Heart right ventricle (tissue), 16 donors: ENCODE measurements at regions of chr6 and their contacts with region 1.

Region 1: GRCh38 chr6:118551063-118552053 is 3.3 kb downstream of the PLN start:
- DNase-seq: no peak
- ATAC-seq: peak in 7 of 8 donors; percentile 43 to 69 (median 67)
- H3K4me3 ChIP-seq: peak overlapping the region; percentile 29 to 60 (median 50)
- H3K27ac ChIP-seq: peak overlapping the region in 9 of 10 donors; percentile 37 to 89 (median 81)
- H3K4me1 ChIP-seq: peaks cover 0 to 12% (median 0%) of the 10 kb centered on the region in 9 donors
- H3K27me3 ChIP-seq: no peaks in the 10 kb centered on the region
- CTCF ChIP-seq: peak; percentile 30 to 74 (median 55)

Region 2: GRCh38 chr6:118292558-118292957 is 258.8 kb before region 1 on chr6:
- intact Hi-C with region 1: loop called in 5 of 10 experiments (anchors 5 to 10 kb)
- DNase-seq: no peak
- ATAC-seq: no peak
- H3K4me3 ChIP-seq: no peak overlapping the region
- H3K27ac ChIP-seq: peak overlapping the region in 8 of 10 donors; percentile 57 to 91 (median 84)
- H3K4me1 ChIP-seq: peaks cover 0 to 54% (median 17%) of the 10 kb centered on the region in 9 donors
- H3K27me3 ChIP-seq: no peaks in the 10 kb centered on the region
- CTCF ChIP-seq: no peak

Region 3: DNA sequence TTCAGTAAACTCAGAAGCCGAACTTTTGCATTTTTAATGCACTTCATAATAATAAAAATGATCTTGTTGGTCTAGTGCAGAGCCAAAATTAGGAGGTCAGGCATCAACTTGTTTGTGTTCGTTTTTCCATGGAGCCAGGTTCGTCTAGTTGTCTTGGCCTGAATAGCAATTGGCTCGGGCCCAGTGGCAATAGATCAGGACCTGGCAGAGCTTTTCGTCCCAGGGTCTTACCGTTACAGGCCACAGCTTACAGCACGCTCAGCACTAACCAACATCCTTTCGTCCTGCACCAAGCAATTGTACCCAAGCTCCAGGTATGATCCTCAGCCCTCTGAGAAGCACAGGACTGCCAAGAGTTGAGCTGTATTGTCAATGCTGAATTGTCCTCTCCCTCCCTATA is 243.8 kb before region 1 on chr6:
- intact Hi-C with region 1: loop called in 1 of 10 experiments (anchors 5 kb)
- DNase-seq: peak; percentile 33 to 60
- ATAC-seq: peak; percentile 24 to 90 (median 67)
- H3K4me3 ChIP-seq: no peak overlapping the region
- H3K27ac ChIP-seq: peak overlapping the region; percentile 34 to 83 (median 74)
- H3K4me1 ChIP-seq: peaks cover 0 to 54% (median 28%) of the 10 kb centered on the region in 9 donors
- H3K27me3 ChIP-seq: no peaks in the 10 kb centered on the region
- CTCF ChIP-seq: no peak

Region 4: DNA sequence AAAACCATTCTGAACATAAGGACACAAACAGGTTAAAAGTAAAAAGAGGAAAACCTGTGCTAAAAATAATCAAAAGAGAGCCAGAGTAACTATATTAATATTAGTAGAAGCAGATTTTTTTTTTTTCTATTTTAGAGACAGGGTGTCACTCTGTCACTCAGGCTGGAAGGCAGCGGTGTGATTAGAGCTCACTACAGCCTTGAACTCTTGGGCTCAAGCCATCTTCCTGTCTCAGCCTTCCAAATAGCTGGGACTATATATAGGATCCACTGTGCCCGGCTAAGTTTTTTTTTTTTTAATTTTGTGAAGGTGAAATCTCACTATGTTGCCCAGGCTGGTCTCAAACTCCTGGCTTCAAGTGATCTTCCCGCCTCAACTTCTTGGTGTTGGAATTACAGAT is 36.7 kb before region 1 on chr6:
- intact Hi-C with region 1: loop called in 4 of 10 experiments (anchors 5 kb)
- DNase-seq: peak in 1 of 2 donors; percentile 75
- ATAC-seq: peak; percentile 93 to 99 (median 98)
- H3K4me3 ChIP-seq: no peak overlapping the region
- H3K27ac ChIP-seq: peak overlapping the region in 9 of 10 donors; percentile 44 to 83 (median 79)
- H3K4me1 ChIP-seq: peaks cover 0 to 42% (median 3%) of the 10 kb centered on the region in 9 donors
- H3K27me3 ChIP-seq: no peaks in the 10 kb centered on the region
- CTCF ChIP-seq: no peak